ENCODE measurements at regions of chr16 and their contacts with region 1.

Region 1: GRCh38 chr16:5502467-5502869 is 404.9 kb upstream of the EEF2KMT start:
- DNase-seq: peak; percentile 32 to 41
- H3K4me3 ChIP-seq: no peak overlapping the region
- H3K27ac ChIP-seq: no peak overlapping the region
- H3K4me1 ChIP-seq: peaks cover 0 to 6% of the 10 kb centered on the region in 2 donors
- H3K27me3 ChIP-seq: no peaks in the 10 kb centered on the region
- CTCF ChIP-seq: peak in 4 of 6 experiments; percentile 25 to 63 (median 52)
- POLR2A ChIP-seq: no peak

Region 2: GRCh38 chr16:5604770-5605169 is 102.3 kb after region 1 on chr16:
- intact Hi-C with region 1: loop called (anchors 10 kb)
- DNase-seq: peak; percentile 4 to 14
- H3K4me3 ChIP-seq: no peak overlapping the region
- H3K27ac ChIP-seq: no peak overlapping the region
- H3K4me1 ChIP-seq: no peaks in the 10 kb centered on the region
- H3K27me3 ChIP-seq: no peaks in the 10 kb centered on the region
- CTCF ChIP-seq: peak in 4 of 6 experiments; percentile 10 to 60 (median 48)
- POLR2A ChIP-seq: no peak

Region 3: GRCh38 chr16:5791011-5791657 is 288.7 kb after region 1 on chr16:
- intact Hi-C with region 1: no loop called
- DNase-seq: no peak
- H3K4me3 ChIP-seq: no peak overlapping the region
- H3K27ac ChIP-seq: no peak overlapping the region
- H3K4me1 ChIP-seq: no peaks in the 10 kb centered on the region
- H3K27me3 ChIP-seq: no peaks in the 10 kb centered on the region
- CTCF ChIP-seq: no peak
- POLR2A ChIP-seq: no peak

Measured in thyroid gland (tissue), 4 donors.